PC-9 (cell line): ENCODE measurements at regions of chr2 and their contacts with region 1.

Region 1: GRCh38 chr2:217360781-217361482 is 501.1 kb upstream of the TNP1 start:
- DNase-seq: peak; percentile 37 to 89
- H3K4me3 ChIP-seq: no peak overlapping the region
- H3K27ac ChIP-seq: peak overlapping the region; percentile 55
- H3K4me1 ChIP-seq: peaks cover 49% of the 10 kb centered on the region
- H3K27me3 ChIP-seq: no peaks in the 10 kb centered on the region
- CTCF ChIP-seq: no peak

Region 2: DNA sequence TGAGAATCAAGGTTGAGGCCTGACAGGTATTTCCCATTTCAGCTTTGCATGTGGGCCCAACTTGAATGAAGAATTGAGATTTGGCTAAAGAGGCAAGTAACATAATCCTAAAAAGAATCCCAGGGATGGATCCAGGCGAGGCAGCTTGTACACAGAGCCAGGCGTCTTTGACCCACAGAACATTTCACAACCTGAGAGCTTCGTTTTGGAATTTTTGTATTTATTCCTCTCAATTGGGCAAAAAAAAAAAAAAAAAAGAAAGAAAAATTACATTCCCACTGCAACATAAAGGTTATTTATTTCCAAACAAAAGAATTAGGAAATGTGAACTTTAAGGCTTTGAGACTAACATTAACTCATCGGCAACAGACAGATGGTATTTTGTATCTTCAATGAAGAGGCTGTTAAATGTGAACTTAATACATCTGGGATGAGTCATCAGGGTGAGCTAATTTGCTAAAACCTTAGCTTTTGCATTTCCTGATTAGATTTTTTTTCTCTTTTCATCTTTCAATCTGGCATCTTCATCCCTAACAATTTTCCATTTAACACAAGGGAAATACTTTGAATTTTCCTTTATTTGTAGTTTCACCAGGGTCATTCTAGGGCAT is 22.5 kb before region 1 on chr2:
- CTCF ChIA-PET with region 1: no interaction called
- POLR2A ChIA-PET with region 1: interaction called, 10 read pairs
- intact Hi-C with region 1: no loop called
- DNase-seq: peak in 1 of 2 experiments; percentile 55
- H3K4me3 ChIP-seq: no peak overlapping the region
- H3K27ac ChIP-seq: peak overlapping the region; percentile 29; the same call in 1 of the 2 replicates
- H3K4me1 ChIP-seq: peaks cover 40% of the 10 kb centered on the region
- H3K27me3 ChIP-seq: no peaks in the 10 kb centered on the region
- CTCF ChIP-seq: no peak

Region 3: GRCh38 chr2:217434181-217434975 is 73.4 kb after region 1 on chr2:
- CTCF ChIA-PET with region 1: no interaction called
- POLR2A ChIA-PET with region 1: interaction called, 18 read pairs
- intact Hi-C with region 1: no loop called
- DNase-seq: peak; percentile 52 to 73
- H3K4me3 ChIP-seq: no peak overlapping the region
- H3K27ac ChIP-seq: no peak overlapping the region
- H3K4me1 ChIP-seq: no peaks in the 10 kb centered on the region
- H3K27me3 ChIP-seq: no peaks in the 10 kb centered on the region
- CTCF ChIP-seq: no peak